Heart left ventricle (tissue), 16 donors: ENCODE measurements at regions of chr10 and their contacts with region 1.

Region 1: GRCh38 chr10:103666087-103666761 is 172.7 kb downstream of the NEURL1 start:
- DNase-seq: no peak
- ATAC-seq: no peak
- H3K4me3 ChIP-seq: no peak overlapping the region
- H3K27ac ChIP-seq: peak overlapping the region in 5 of 12 donors; percentile 35 to 75 (median 74)
- H3K4me1 ChIP-seq: peaks cover 3 to 85% (median 56%) of the 10 kb centered on the region in 12 donors
- H3K27me3 ChIP-seq: no peaks in the 10 kb centered on the region
- CTCF ChIP-seq: peak in 10 of 12 donors; percentile 17 to 51 (median 40)
- POLR2A ChIP-seq: no peak

Region 2: GRCh38 chr10:103605359-103606095 is 60.7 kb before region 1 on chr10:
- intact Hi-C with region 1: loop called in 1 of 10 experiments (anchors 5 kb)
- DNase-seq: peak in 4 of 5 donors; percentile 46 to 60 (median 54)
- ATAC-seq: peak; percentile 24 to 66 (median 53)
- H3K4me3 ChIP-seq: no peak overlapping the region
- H3K27ac ChIP-seq: no peak overlapping the region
- H3K4me1 ChIP-seq: peaks cover 0 to 10% (median 2%) of the 10 kb centered on the region in 12 donors
- H3K27me3 ChIP-seq: no peaks in the 10 kb centered on the region
- CTCF ChIP-seq: peak; percentile 66 to 84 (median 78)
- POLR2A ChIP-seq: no peak

Region 3: DNA sequence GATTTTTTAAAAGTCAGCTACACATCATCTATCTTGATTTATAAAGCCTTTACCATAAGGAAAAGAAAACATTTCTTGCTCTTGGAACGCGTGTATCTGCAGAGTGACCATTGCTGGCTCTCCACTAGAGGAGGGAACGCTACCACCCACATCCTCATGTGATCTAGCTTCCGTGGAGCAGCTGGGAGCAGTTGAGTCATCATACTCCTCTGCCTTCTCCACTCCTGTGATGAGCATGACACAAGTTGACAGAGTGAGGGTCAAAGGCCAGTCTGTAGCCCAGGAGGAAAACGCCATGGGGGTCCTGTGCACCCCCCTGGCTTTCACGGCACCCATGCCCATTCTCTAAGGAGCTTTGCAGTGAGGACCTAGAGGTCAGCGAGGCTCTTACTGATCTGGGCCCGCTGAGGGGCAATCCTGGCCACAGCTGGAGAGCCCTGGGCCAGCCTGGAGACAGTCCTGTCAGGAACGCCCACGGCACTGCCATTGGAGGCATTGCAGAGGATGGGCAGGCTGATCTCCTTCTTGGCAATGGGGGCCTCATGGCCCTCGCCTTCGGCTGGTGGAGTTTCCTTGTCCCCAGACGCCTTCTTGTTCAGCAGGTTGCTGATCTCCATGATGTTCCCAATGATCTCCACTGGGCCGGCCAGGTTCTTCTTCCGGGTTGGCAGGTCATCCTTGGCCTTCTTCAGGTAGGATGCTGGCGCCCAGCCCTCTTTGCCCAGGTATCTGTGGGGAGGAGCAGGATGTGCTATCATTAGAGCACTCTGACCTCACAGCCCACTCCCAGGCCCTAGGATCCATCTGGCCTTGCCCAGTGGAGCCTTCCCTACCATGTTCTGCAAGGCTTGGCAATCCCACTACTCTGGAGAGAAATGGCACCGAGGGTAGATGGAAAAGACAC is 53.5 kb before region 1 on chr10:
- intact Hi-C with region 1: loop called in 6 of 10 experiments (anchors 2 to 5 kb)
- DNase-seq: peak in 1 of 5 donors; percentile 40
- ATAC-seq: peak in 3 of 4 donors; percentile 46 to 56 (median 49)
- H3K4me3 ChIP-seq: no peak overlapping the region
- H3K27ac ChIP-seq: no peak overlapping the region
- H3K4me1 ChIP-seq: peaks cover 8 to 70% (median 36%) of the 10 kb centered on the region in 12 donors
- H3K27me3 ChIP-seq: no peaks in the 10 kb centered on the region
- CTCF ChIP-seq: no peak
- POLR2A ChIP-seq: no peak

Region 4: GRCh38 chr10:103759100-103759781 is 93.0 kb after region 1 on chr10:
- intact Hi-C with region 1: no loop called
- DNase-seq: peak in 4 of 5 donors; percentile 77 to 84 (median 80)
- ATAC-seq: peak; percentile 85 to 92 (median 88)
- H3K4me3 ChIP-seq: peak overlapping the region in 1 of 12 donors; percentile 1
- H3K27ac ChIP-seq: peak overlapping the region; percentile 56 to 100 (median 94)
- H3K4me1 ChIP-seq: peaks cover 11 to 85% (median 69%) of the 10 kb centered on the region in 12 donors
- H3K27me3 ChIP-seq: no peaks in the 10 kb centered on the region
- CTCF ChIP-seq: no peak
- POLR2A ChIP-seq: peak in 1 of 2 donors; percentile 37